Aorta (tissue), 5 donors: ENCODE measurements at regions of chr2 and their contacts with region 1.

Region 1: GRCh38 chr2:85561317-85561979 is at the start of gene GGCX:
- DNase-seq: peak; percentile 97 to 99
- ATAC-seq: peak; percentile 98
- H3K4me3 ChIP-seq: peak within 1 kb of the TSS; percentile 63 to 76
- H3K27ac ChIP-seq: peak within 1 kb of the TSS in 1 of 2 donors; percentile 39
- H3K4me1 ChIP-seq: no peaks in the 10 kb centered on the region
- H3K27me3 ChIP-seq: no peaks in the 10 kb centered on the region
- total RNA-seq, gene GGCX: 30.3 to 48.3 TPM

Region 2: DNA sequence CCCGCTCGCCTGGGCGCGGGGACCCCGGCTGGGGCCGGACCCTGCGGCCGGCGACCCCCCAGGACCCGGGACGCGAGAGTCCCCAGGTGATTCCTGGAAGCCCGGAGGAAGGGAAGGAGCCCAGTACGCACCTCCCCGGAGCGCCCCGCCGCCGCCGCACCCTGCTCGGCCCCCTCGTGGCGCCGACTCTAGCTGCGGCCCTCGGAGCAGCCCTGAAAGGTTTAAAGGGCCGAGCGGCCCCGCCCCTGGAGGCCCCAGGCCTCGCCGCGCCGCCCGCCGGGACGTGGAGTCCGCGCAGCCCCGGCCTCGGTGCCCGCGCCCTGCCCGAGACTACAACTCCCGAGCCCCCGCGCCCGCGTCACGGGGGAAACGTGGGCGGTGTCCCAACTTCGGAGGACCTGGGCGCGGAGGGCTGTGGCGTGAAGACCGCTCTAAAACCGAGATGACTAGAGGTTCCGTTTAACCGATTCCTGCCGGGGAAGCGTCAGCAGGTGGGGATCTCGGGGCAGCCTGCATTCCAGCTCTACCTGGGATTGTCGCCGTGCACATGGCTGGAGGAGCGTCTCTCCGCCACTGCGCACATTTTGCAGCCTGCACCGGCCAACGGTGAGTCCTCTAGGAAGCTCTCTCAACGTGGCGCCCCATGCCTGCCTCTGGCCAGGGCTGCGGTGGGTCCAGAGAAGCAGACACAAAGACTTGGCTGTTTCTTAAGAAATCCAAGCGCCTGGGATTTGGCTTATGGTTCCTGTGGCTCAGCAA is 41.2 kb after region 1 on chr2 and contains the start of gene TMEM150A:
- intact Hi-C with region 1: loop called (anchors 5 kb)
- DNase-seq: peak; percentile 97 to 98
- ATAC-seq: peak; percentile 98
- H3K4me3 ChIP-seq: peak within 1 kb of the TSS; percentile 71 to 90
- H3K27ac ChIP-seq: peak within 1 kb of the TSS in 1 of 2 donors; percentile 35
- H3K4me1 ChIP-seq: peaks cover 2 to 8% of the 10 kb centered on the region in 2 donors
- H3K27me3 ChIP-seq: no peaks in the 10 kb centered on the region
- total RNA-seq, gene TMEM150A: 13.9 to 19.2 TPM

Region 3: DNA sequence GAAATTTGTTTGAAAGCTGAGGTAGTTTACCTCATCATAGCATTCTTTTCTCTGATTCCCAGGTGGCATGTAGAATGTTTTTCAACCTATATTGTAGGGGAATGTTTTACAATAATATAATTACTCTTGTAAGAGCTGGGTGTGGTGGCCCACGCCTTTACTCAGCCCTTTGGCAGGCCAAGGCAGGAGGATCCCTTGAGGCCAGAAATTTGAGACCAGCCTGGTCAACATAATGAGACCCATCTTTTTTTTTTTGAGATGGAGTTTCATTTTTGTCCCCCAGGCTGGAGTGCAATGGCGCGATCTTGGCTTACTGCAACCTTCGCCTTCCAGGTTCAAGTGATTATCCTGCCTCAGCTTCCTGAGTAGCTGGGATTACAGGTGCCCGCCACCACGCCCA is 58.2 kb after region 1 on chr2:
- intact Hi-C with region 1: loop called in 1 of 2 experiments (anchors 5 kb)
- DNase-seq: no peak
- ATAC-seq: no peak
- H3K4me3 ChIP-seq: no peak overlapping the region
- H3K27ac ChIP-seq: no peak overlapping the region
- H3K4me1 ChIP-seq: no peaks in the 10 kb centered on the region
- H3K27me3 ChIP-seq: no peaks in the 10 kb centered on the region